Activated B cell treated with CpG ODN at 0.5 μM for 24 hours (primary cell): ENCODE measurements at regions of chr12 and their contacts with region 1.

Region 1: GRCh38 chr12:102958073-102958829 is 777 bp downstream of the ASCL1 start:
- DNase-seq: no peak
- ATAC-seq: peak; percentile 73
- H3K4me3 Mint-ChIP-seq: peak overlapping the region; percentile 76
- H3K27ac Mint-ChIP-seq: no peak overlapping the region
- H3K4me1 Mint-ChIP-seq: peaks cover 28% of the 10 kb centered on the region
- H3K27me3 Mint-ChIP-seq: peaks cover 81% of the 10 kb centered on the region
- CTCF ChIP-seq: no peak

Region 2: GRCh38 chr12:103073630-103074029 is 115.4 kb after region 1 on chr12:
- CTCF ChIA-PET with region 1: no interaction called
- POLR2A ChIA-PET with region 1: no interaction called
- intact Hi-C with region 1: no loop called
- DNase-seq: no peak
- ATAC-seq: no peak
- H3K4me3 Mint-ChIP-seq: no peak overlapping the region
- H3K27ac Mint-ChIP-seq: no peak overlapping the region
- H3K4me1 Mint-ChIP-seq: no peaks in the 10 kb centered on the region
- H3K27me3 Mint-ChIP-seq: no peaks in the 10 kb centered on the region
- CTCF ChIP-seq: no peak

Region 3: DNA sequence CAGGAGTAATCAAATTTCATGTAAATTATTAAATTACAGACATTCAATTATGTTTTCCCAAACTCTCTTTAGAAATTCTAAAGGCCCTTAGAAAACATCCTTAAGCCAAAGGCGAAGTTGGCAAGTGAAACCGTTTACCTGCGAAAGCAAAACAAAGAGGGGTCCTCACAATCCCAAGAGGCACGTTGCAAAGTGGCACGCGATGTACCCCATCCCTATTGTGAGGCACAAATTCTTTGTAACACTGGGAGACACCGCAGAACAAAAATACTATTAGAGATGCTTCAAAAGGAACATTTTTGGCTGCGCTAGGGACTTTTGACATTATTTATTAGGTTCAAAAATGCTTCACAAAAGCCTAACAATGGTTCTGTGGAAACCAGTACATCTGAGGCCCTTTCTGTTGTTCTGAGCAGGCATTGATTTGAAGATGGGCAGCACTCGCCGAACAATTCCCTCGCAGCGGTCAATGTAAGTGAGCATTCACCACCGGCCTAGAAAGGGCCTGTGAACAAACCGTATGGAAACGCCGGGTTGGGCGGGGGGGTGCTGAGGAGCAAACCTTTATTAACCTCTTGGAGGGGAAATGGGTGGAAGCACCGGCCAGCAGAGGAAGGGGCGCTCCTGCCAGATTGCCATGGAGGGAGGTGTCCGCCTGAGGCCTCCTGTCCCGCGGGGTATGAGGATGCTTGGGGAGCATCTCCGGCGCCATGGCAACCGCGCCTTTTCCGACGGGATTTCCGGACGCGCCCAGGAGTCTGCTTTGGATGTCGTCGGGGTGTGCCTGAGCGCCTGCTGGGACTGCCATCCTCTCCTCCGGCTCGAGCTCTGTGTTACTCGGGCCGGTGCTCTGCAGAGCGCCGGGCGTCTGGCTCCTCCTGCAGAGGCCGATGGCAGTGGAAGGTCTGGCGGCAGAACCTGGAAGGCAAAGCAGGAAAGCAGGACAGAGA is 343.7 kb after region 1 on chr12:
- CTCF ChIA-PET with region 1: no interaction called
- POLR2A ChIA-PET with region 1: no interaction called
- intact Hi-C with region 1: loop called (anchors 10 kb)
- DNase-seq: no peak
- ATAC-seq: no peak
- H3K4me3 Mint-ChIP-seq: no peak overlapping the region
- H3K27ac Mint-ChIP-seq: no peak overlapping the region
- H3K4me1 Mint-ChIP-seq: peaks cover 11% of the 10 kb centered on the region
- H3K27me3 Mint-ChIP-seq: no peaks in the 10 kb centered on the region
- CTCF ChIP-seq: no peak